AG04450 (cell line): ENCODE measurements at regions of chr5 and their contacts with region 1.

Region 1: DNA sequence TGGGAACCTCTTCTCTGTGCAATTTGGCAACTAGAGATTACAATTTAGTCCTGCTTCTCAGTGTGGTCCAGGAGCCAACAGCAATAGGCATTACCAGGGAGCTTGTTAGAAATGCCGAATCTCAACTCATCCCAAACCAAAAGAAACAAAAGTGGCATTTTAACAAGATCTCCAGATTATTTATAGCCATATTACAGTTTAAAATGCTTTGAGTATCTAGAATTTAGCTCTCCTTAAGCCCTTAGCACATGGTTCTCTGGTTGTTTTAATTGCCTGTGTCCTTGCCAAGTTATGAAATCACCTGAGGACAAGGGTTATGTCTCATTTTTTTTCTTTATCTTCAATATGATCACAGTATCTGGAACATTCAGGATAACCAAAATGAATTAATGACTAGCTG is 51.6 kb upstream of the TAS2R1 start:
- DNase-seq: no peak
- H3K4me3 ChIP-seq: no peak overlapping the region
- H3K27ac ChIP-seq: no peak overlapping the region
- H3K27me3 ChIP-seq: no peaks in the 10 kb centered on the region
- CTCF ChIP-seq: no peak

Region 2: DNA sequence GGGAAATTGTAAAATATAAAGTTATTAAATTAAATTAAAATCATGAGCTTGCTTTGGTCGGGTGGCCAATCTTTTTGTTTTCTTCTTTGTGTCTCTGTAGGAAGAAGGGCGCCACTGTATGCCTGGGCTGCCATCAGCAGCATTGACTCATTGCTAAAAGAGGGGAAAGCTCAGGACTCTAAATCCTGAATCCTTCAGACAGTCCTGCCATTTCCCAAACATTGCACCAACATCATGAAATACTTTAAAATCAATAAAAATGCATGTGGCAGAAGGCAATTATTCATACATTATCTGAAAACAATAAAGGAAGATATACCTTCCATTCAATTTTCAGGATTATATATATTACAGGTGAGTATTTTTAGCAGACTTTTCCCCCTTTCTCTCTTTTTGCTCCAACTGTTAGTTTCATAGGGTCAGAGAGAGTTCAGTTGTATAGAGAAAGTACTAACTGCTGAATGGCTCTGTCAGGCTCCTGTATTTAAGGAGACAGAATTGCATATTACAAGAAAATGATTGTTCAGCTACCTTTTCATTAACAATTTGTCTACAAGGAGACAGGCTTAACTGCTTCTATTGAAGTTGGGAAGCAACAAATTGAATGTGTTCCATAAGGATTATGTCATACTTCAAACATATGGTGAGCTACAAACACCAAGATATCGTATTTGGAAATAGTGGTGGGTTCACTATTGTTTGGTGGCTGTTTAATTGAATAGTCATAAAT is 472.3 kb after region 1 on chr5:
- CTCF ChIA-PET with region 1: no interaction called
- POLR2A ChIA-PET with region 1: interaction called, 11 read pairs
- DNase-seq: no peak
- H3K4me3 ChIP-seq: no peak overlapping the region
- H3K27ac ChIP-seq: no peak overlapping the region
- H3K27me3 ChIP-seq: no peaks in the 10 kb centered on the region
- CTCF ChIP-seq: no peak